ENCODE measurements at regions of chr3 and their contacts with region 1.

Region 1: DNA sequence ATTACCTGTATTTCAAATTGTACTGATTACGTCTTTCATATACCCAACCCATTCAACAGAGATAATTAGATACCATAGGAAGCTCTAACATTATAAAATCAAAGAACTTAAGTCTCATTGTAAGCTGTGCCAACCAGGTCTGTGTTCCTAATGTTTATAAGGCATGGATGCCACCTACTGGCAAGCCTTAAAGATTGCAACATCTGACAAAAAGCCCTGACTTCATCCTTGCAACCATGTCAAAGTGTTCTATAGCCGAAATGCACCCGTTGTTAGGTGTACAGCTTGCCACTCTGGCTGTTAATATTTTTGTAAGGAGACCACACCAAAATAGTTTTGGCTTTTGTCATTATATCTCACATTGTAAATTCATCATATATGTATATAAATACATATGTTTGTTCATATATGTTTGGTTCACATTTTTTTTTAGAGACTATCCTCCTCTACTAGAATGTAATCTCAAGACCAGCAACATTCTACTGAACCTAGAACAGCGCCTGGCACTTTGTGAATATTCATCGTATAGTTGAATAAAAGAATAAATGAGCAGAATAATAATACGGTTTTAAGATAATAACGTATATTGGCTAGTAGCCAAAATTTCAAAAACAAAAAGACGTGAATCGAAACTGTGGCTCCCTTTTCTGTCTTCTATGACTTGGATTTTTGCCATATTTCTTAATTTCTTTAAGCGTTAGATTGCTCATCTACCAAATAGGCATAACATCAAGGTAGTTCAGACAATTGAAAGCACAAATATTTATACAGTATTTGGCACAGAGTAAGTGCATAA is 258.1 kb downstream of the TBL1XR1 start:
- DNase-seq: peak; percentile 92
- H3K4me3 ChIP-seq: peak overlapping the region; percentile 17
- H3K27ac ChIP-seq: no peak overlapping the region
- H3K4me1 ChIP-seq: peaks cover 26% of the 10 kb centered on the region
- H3K27me3 ChIP-seq: no peaks in the 10 kb centered on the region
- CTCF ChIP-seq: peak; percentile 89

Region 2: DNA sequence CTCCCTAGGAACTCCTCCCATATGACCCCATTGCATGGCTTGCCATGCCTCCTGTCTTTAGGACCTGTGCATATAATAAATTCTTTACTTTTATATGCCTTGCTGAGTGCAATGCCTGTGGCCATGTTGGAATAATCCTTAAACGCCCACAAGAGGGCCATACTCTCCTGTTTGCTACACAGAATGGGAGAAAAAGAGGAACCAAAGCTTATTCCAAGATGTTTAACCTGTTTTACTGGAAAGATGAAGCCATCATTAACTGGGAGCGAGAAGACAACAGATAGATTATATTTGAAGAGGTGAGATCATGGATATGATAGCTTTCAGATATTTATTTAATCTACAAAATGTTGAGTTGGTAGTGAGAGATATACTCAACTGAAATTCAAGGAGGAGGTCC is 982.2 kb before region 1 on chr3:
- CTCF ChIA-PET with region 1: interaction called, 3 read pairs
- POLR2A ChIA-PET with region 1: no interaction called
- intact Hi-C with region 1: loop called (anchors 1 kb)
- DNase-seq: peak; percentile 16
- H3K4me3 ChIP-seq: no peak overlapping the region
- H3K27ac ChIP-seq: no peak overlapping the region
- H3K4me1 ChIP-seq: no peaks in the 10 kb centered on the region
- H3K27me3 ChIP-seq: no peaks in the 10 kb centered on the region
- CTCF ChIP-seq: peak; percentile 45; the same call in 1 of the 2 replicates

Region 3: DNA sequence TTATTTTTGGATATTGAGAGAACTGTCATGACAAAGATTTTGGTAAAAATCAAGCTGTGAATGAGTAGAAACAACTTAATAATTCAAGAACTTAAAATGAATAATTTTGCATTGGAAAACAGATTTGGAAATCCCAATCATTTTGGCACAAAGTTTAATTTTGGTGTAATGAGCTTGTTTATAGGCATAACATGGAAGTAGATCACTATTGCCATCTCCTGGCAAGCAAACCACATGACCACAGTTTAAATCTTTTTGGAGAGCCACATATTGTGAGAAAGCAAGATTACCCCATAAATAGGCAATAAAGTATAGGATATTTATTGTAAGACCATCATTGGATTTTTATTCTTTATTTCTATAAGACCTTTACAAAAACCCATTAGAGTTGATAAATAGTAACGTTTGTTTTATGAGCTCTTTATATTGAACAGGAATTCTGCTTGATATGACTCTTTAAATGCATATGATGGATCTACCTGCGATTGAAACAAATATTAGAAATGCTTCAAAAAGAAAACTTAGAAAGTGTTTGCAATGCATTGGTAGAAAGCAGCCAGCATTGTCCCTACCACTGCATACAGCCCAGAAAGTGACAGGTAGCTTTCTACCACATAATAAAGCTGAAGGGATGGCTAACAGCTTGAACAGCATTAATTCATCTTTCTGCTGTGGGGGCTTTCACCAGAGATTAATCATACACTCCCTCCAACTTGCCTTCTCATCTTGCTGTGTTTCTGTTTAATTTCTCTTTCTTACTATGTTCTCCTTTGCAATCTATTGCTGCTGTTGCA is 508.8 kb before region 1 on chr3:
- CTCF ChIA-PET with region 1: interaction called, 4 read pairs
- POLR2A ChIA-PET with region 1: no interaction called
- intact Hi-C with region 1: loop called (anchors 5 kb)
- DNase-seq: peak; percentile 61
- H3K4me3 ChIP-seq: no peak overlapping the region
- H3K27ac ChIP-seq: no peak overlapping the region
- H3K4me1 ChIP-seq: no peaks in the 10 kb centered on the region
- H3K27me3 ChIP-seq: no peaks in the 10 kb centered on the region
- CTCF ChIP-seq: peak; percentile 71

Region 4: GRCh38 chr3:176514297-176514696 is 424.9 kb before region 1 on chr3:
- CTCF ChIA-PET with region 1: no interaction called
- POLR2A ChIA-PET with region 1: no interaction called
- intact Hi-C with region 1: loop called (anchors 2 kb)
- DNase-seq: peak; percentile 68
- H3K4me3 ChIP-seq: no peak overlapping the region
- H3K27ac ChIP-seq: no peak overlapping the region
- H3K4me1 ChIP-seq: no peaks in the 10 kb centered on the region
- H3K27me3 ChIP-seq: no peaks in the 10 kb centered on the region
- CTCF ChIP-seq: peak; percentile 54

Region 5: DNA sequence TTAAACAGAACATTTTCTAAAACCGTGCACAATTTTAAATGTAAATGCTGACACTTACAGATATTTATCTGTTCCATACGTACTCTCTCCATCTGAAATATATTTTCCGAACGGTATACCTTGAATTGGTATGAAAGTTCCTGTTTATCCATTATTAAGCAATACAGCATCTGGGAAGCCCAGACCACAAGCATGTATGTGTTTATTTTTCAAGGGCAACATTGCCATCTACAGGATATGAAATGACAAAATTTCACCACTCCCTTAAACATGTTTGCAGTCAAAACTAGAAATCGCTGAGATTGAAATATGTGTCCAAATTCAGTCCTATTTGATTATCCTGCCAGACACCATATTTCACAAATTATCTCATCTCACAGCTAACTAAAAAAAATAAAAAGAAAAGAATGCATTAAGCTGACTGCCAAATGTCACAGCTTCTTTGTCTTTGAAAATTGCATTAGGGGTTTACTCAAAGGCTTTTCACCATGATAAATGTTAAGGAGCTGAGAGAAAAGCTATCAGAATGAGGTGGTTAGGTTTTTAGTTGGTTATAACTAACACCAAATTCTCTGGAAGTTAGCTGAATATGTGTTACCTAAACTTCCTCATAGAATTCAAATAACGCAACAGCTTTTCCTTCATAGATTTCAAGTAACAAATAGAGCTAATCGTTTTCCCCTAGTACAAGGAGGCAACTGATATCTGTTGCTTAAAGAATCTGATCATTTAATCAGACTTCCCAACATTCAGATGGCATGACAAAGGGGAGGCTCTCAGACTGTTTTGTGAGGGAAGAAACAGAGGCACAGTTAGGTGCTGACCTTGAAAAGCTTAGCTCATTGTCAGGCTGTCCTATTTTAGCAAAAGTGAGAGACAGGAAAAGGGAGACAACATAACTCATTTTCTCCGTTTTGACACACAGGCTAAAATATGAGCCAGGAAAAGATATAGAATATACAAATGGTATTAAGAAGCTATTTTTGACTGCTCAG is 275.1 kb before region 1 on chr3:
- CTCF ChIA-PET with region 1: interaction called, 8 read pairs
- POLR2A ChIA-PET with region 1: no interaction called
- intact Hi-C with region 1: loop called (anchors 2 kb)
- DNase-seq: peak; percentile 79
- H3K4me3 ChIP-seq: no peak overlapping the region
- H3K27ac ChIP-seq: peak overlapping the region; percentile 35
- H3K4me1 ChIP-seq: peaks cover 17% of the 10 kb centered on the region
- H3K27me3 ChIP-seq: no peaks in the 10 kb centered on the region
- CTCF ChIP-seq: peak; percentile 67

Region 6: DNA sequence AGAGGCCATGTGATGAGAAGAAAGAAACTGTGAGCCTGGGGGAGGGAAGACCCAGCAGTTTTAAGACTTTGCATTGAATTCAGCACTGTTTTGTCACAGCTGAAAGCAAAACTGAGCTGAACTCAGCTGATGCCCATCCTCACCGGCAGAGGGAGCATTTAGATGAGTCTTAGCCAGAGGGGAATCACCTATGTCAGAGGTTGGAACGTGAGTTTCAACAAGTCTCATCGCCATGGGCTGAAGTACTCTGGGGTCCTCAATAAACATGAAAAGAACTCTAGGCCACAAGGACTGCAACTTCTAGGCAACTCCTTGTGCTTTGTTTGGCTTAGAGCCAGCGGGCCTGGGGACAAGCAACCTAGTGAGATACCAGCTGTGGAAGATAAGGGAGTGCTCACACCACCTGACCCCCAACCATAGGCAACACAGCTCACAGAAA is 66.4 kb before region 1 on chr3:
- CTCF ChIA-PET with region 1: interaction called, 5 read pairs
- POLR2A ChIA-PET with region 1: no interaction called
- intact Hi-C with region 1: loop called (anchors 1 kb)
- DNase-seq: peak; percentile 77
- H3K4me3 ChIP-seq: no peak overlapping the region
- H3K27ac ChIP-seq: no peak overlapping the region
- H3K4me1 ChIP-seq: no peaks in the 10 kb centered on the region
- H3K27me3 ChIP-seq: no peaks in the 10 kb centered on the region
- CTCF ChIP-seq: peak; percentile 93

Region 7: DNA sequence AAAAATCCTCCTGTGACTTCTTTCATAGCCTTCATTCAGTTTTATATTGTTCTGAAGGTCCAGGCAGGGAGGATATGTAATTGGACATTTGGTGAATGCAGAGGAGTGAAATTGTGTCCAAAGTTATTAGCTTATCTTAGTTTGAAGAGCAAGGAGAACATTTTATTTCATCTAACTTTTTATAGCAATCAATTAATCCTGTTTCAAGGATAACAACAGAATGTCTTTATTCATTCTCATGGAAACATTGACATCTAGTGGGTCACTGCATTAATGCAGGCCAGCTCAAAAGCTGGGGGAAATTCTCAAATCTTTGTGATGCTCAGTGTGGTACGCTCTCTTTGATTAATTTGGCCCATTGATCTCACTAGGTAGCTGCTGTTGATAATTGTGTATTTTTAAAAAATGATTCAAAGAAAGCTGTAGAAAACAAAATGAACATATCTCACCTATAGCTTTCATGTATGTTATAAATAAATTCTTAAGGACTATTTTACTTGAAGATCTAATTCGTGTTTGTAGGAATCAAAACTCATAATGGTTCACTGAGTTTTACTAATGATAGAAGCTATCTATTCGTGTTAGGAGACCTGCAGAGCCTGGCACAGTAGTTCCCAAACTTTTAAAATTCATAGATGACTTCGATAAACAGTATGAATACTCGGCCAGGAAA is 1446.2 kb after region 1 on chr3:
- CTCF ChIA-PET with region 1: no interaction called
- POLR2A ChIA-PET with region 1: no interaction called
- intact Hi-C with region 1: loop called (anchors 10 kb)
- DNase-seq: peak; percentile 64
- H3K4me3 ChIP-seq: no peak overlapping the region
- H3K27ac ChIP-seq: no peak overlapping the region
- H3K4me1 ChIP-seq: peaks cover 14% of the 10 kb centered on the region
- H3K27me3 ChIP-seq: no peaks in the 10 kb centered on the region
- CTCF ChIP-seq: peak; percentile 92

Measured in A673 (cell line).